CD4-positive, alpha-beta T cell (primary cell): ENCODE measurements at regions of chr18 and their contacts with region 1.

Region 1: GRCh38 chr18:45664824-45665763 is 49.8 kb downstream of the SLC14A2 start:
- DNase-seq: peak; percentile 47 to 85 (median 59)
- ATAC-seq: peak; percentile 75
- H3K4me3 ChIP-seq: no peak overlapping the region
- H3K4me3 Mint-ChIP-seq: peak overlapping the region; percentile 59
- H3K27ac ChIP-seq: no peak overlapping the region
- H3K27ac Mint-ChIP-seq: peak overlapping the region; percentile 69
- H3K4me1 ChIP-seq: peaks cover 53% of the 10 kb centered on the region
- H3K4me1 Mint-ChIP-seq: peaks cover 61% of the 10 kb centered on the region
- H3K27me3 ChIP-seq: no peaks in the 10 kb centered on the region
- H3K27me3 Mint-ChIP-seq: no peaks in the 10 kb centered on the region
- CTCF ChIP-seq: peak; percentile 93

Region 2: GRCh38 chr18:45631077-45631476 is 34.0 kb before region 1 on chr18:
- CTCF ChIA-PET with region 1: no interaction called
- POLR2A ChIA-PET with region 1: no interaction called
- intact Hi-C with region 1: no loop called
- DNase-seq: no peak
- ATAC-seq: no peak
- H3K4me3 ChIP-seq: no peak overlapping the region
- H3K4me3 Mint-ChIP-seq: no peak overlapping the region
- H3K27ac ChIP-seq: no peak overlapping the region
- H3K27ac Mint-ChIP-seq: no peak overlapping the region
- H3K4me1 ChIP-seq: no peaks in the 10 kb centered on the region
- H3K4me1 Mint-ChIP-seq: no peaks in the 10 kb centered on the region
- H3K27me3 ChIP-seq: no peaks in the 10 kb centered on the region
- H3K27me3 Mint-ChIP-seq: peaks cover 9% of the 10 kb centered on the region
- CTCF ChIP-seq: no peak

Region 3: DNA sequence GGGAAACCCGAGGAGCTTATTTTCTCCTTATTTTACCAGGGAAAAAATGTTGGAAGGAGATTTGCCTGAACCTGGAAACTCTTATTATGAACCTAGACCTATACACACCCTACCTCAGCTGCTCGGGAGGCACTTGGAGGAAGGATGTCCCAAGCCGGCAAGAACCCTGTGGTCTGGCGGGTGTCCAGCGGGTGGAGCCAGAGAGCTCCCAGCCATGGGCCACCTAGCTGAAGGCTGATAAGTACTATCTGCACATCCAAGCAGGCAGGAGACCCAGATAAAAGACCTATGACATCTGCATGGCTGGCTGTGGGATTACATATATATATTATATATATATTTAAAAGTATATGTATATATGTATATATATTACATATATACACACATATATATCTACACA is 57.8 kb after region 1 on chr18:
- CTCF ChIA-PET with region 1: no interaction called
- POLR2A ChIA-PET with region 1: no interaction called
- intact Hi-C with region 1: loop called in 1 of 2 experiments (anchors 1 kb)
- DNase-seq: peak; percentile 38 to 73 (median 52)
- ATAC-seq: peak; percentile 80
- H3K4me3 ChIP-seq: no peak overlapping the region
- H3K4me3 Mint-ChIP-seq: no peak overlapping the region
- H3K27ac ChIP-seq: no peak overlapping the region
- H3K27ac Mint-ChIP-seq: no peak overlapping the region
- H3K4me1 ChIP-seq: peaks cover 3% of the 10 kb centered on the region
- H3K4me1 Mint-ChIP-seq: no peaks in the 10 kb centered on the region
- H3K27me3 ChIP-seq: no peaks in the 10 kb centered on the region
- H3K27me3 Mint-ChIP-seq: peaks cover 4% of the 10 kb centered on the region
- CTCF ChIP-seq: peak; percentile 65

Region 4: GRCh38 chr18:45839414-45840395 is 174.6 kb after region 1 on chr18:
- CTCF ChIA-PET with region 1: no interaction called
- POLR2A ChIA-PET with region 1: interaction called, 3 read pairs
- intact Hi-C with region 1: loop called in 1 of 2 experiments (anchors 2 kb)
- DNase-seq: peak in 6 of 14 experiments; percentile 13 to 66 (median 28)
- ATAC-seq: peak; percentile 81
- H3K4me3 ChIP-seq: no peak overlapping the region
- H3K4me3 Mint-ChIP-seq: peak overlapping the region; percentile 61
- H3K27ac ChIP-seq: no peak overlapping the region
- H3K27ac Mint-ChIP-seq: no peak overlapping the region
- H3K4me1 ChIP-seq: peaks cover 24% of the 10 kb centered on the region
- H3K4me1 Mint-ChIP-seq: peaks cover 14% of the 10 kb centered on the region
- H3K27me3 ChIP-seq: peaks cover 29 to 32% of the 10 kb centered on the region in 2 experiments
- H3K27me3 Mint-ChIP-seq: peaks cover 53% of the 10 kb centered on the region
- CTCF ChIP-seq: peak; percentile 17

Region 5: DNA sequence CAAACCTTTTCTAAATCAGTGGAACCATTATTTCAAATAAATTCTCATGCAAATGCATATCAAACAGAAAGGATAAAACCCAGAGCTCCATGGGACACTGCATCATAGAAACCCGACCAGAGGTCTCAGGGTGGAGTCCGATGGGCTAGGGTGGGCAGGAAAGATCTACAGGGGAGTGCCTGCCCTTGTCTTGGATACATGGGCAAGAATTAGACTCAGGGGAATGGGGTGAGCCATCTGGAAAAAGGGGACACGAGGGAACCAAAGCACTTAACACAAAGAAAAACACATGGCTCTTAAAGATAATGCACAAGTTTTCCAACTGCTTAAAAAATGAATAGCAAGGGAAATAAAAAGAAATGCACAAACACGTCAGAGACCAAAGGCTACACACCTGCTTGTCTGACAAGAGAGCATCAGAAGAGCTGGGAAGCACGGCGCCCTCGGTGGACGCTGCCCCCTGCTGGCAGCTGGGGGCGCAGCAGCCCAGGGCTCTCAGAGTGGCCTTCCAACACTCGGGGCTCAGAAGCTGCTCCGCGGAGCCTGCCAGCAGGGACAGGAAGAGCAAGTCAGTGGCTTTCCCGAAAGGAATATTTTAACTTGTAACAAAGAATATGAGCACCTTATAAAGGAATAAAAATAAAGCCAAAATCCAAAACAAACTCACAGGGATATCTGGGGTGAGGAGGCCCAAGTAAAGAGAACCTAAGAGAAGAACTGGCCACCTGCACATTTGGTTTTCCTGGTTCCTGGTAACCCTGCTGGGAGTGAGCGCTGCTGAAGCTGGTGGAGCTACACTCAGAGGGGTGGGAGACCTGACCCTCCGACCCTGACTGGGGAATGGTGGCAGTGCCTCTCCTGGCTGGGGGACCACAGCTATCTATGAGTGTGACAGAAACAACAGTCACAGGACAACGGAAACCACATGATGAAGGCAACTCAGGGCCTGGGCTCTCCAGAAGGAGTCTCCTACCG is 214.9 kb after region 1 on chr18:
- CTCF ChIA-PET with region 1: interaction called, 52 read pairs
- POLR2A ChIA-PET with region 1: interaction called, 21 read pairs
- intact Hi-C with region 1: loop called (anchors 1 kb)
- DNase-seq: peak; percentile 39 to 84 (median 69)
- ATAC-seq: peak; percentile 96
- H3K4me3 ChIP-seq: no peak overlapping the region
- H3K4me3 Mint-ChIP-seq: no peak overlapping the region
- H3K27ac ChIP-seq: no peak overlapping the region
- H3K27ac Mint-ChIP-seq: peak overlapping the region; percentile 2
- H3K4me1 ChIP-seq: peaks cover 10% of the 10 kb centered on the region
- H3K4me1 Mint-ChIP-seq: peaks cover 19% of the 10 kb centered on the region
- H3K27me3 ChIP-seq: no peaks in the 10 kb centered on the region
- H3K27me3 Mint-ChIP-seq: no peaks in the 10 kb centered on the region
- CTCF ChIP-seq: peak; percentile 99

Region 6: DNA sequence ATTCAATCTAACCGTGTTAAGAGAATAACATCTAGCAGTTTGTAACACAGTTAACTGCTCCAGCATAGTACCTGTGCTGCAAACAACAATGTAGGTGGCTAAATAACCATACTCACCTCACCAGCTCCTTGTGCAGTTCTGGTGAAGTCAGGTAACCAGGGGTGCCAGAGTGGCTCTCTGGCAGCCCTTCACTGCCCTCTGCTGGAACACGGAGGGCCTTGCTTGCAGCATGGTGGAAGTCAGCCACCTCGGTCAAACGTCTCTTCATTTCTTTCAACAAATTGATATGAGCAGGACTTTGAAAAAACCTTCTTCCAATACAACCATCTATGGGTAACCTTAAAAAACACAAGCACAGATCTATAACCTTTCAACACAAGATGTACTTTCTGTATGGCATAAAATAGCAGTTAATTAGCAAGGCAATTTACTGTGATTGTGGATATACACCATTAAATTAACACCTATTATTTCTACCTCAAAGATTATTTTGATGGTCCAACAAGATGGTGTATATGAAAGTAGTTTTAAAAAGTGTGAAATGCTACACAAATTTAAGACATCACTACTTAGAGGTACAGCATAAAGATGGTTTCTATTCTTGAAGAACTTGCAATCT is 245.4 kb after region 1 on chr18:
- CTCF ChIA-PET with region 1: interaction called, 4 read pairs
- POLR2A ChIA-PET with region 1: no interaction called
- intact Hi-C with region 1: loop called (anchors 1 kb)
- DNase-seq: peak; percentile 39 to 78 (median 56)
- ATAC-seq: peak; percentile 81
- H3K4me3 ChIP-seq: no peak overlapping the region
- H3K4me3 Mint-ChIP-seq: no peak overlapping the region
- H3K27ac ChIP-seq: no peak overlapping the region
- H3K27ac Mint-ChIP-seq: no peak overlapping the region
- H3K4me1 ChIP-seq: no peaks in the 10 kb centered on the region
- H3K4me1 Mint-ChIP-seq: no peaks in the 10 kb centered on the region
- H3K27me3 ChIP-seq: no peaks in the 10 kb centered on the region
- H3K27me3 Mint-ChIP-seq: no peaks in the 10 kb centered on the region
- CTCF ChIP-seq: peak; percentile 69